Esophagus squamous epithelium (tissue), 5 donors: ENCODE measurements at regions of chr16 and their contacts with region 1.

Region 1: DNA sequence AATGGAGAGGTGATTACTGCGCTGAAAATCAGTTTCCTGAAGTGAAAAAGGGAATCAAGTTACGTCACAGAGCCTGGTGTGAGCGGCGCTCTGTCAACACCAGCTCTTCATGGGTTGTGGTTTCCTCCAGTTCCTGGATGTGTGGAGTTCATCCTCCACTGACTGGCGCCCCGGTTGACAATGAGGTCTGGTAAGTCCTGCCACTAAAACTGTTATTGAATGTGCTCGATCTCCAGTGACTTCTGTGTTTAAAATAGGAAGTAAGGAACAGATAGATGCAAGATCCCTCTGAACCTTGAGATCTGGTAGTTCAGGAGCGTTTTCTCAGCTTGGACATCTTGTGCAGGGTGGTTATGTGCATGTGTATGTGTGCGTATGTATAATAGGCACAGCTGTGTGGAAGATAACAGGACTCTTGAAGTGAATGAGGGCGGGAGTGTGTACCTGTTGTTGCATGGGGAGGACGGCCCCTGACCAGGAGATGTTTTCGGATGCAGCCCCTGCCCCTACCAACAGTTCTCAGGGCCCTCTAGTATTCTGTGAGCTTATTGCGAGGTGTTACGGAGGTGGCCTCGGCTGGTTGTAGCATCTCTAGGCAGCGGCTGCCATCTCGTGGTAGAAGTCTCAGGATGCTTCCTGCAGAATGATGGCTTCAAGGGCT is 22.0 kb upstream of the GOT2 start:
- DNase-seq: peak; percentile 9
- H3K4me3 ChIP-seq: no peak overlapping the region
- H3K27ac ChIP-seq: no peak overlapping the region
- H3K4me1 ChIP-seq: peaks cover 0 to 7% (median 0%) of the 10 kb centered on the region in 3 donors
- H3K27me3 ChIP-seq: no peaks in the 10 kb centered on the region
- CTCF ChIP-seq: peak; percentile 32 to 77 (median 62)
- POLR2A ChIP-seq: no peak

Region 2: DNA sequence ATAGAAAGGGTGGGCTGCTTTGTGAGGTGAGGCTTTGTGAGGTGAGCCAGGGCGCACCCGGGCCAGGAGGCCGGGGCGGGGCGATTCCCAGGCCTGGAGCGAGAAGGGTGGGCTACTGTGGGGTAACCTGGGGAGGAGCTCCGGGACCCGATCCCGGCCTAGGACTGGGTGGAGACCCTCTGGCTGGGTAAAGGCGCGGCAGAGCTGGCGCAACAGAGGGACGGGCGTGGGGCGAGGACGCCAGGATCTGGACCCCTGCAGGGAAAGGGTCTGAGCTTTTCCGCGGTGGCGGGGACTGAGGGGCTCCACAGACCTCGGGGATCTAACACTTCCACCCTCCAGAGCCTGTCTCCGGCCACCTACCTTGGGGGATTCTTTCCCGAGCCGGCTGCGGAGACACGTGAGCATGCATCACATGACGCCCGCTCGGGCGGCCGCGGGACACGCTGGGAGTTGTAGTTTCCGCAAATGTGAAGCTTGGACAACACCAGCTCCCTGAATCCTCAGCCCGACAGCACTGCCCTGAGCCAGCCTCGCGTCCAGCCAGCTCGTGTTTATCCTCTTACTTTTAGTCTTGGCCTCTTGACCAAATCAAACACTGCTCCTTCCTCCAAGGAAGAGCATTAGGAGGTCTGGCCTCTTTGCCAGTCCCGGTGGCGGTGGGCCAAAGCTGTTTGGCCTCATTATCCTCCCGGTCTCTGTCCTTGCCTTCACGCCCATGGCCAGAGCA is 71.6 kb before region 1 on chr16 and contains the start of gene SLC38A7:
- intact Hi-C with region 1: loop called (anchors 10 kb)
- DNase-seq: peak; percentile 13
- H3K4me3 ChIP-seq: peak within 1 kb of the TSS; percentile 66 to 90 (median 83)
- H3K27ac ChIP-seq: peak within 1 kb of the TSS; percentile 76 to 84 (median 80)
- H3K4me1 ChIP-seq: peaks cover 10 to 22% (median 13%) of the 10 kb centered on the region in 3 donors
- H3K27me3 ChIP-seq: no peaks in the 10 kb centered on the region
- CTCF ChIP-seq: no peak
- POLR2A ChIP-seq: no peak
- total RNA-seq, gene SLC38A7: 9.1 to 15.6 (median 13.1) TPM

Region 3: DNA sequence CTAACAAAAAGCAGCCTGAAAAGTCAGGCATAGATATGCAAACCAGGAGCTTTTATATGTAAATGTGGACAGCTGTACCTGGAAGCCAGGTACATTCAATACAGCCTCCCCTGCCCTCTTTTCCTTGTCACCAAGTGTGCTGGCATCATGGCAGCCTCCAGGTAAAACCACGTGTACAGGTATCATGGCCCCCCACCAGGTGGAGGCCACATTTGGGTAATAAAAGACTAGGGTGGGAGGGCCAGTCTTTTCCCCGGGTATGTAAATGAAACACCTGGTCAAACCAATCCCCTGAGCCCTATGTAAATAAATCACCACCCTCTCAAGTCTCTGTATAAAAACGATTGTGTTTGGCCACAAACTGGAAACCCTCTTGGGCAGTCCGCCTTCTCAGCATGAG is 204.4 kb after region 1 on chr16:
- intact Hi-C with region 1: no loop called
- DNase-seq: no peak
- H3K4me3 ChIP-seq: no peak overlapping the region
- H3K27ac ChIP-seq: no peak overlapping the region
- H3K4me1 ChIP-seq: no peaks in the 10 kb centered on the region
- H3K27me3 ChIP-seq: no peaks in the 10 kb centered on the region
- CTCF ChIP-seq: no peak
- POLR2A ChIP-seq: no peak